ENCODE measurements at regions of chr16 and their contacts with region 1.

Region 1: GRCh38 chr16:75198135-75198600 is 8.8 kb downstream of the CTRB2 start:
- DNase-seq: peak in 1 of 4 experiments; percentile 20
- ATAC-seq: peak; percentile 30
- H3K4me3 ChIP-seq: no peak overlapping the region
- H3K27ac ChIP-seq: no peak overlapping the region
- H3K4me1 ChIP-seq: peaks cover 0 to 8% of the 10 kb centered on the region in 2 experiments; a peak in 3 of 5 replicates
- H3K27me3 ChIP-seq: peaks cover 39 to 46% of the 10 kb centered on the region in 2 experiments
- CTCF ChIP-seq: no peak
- EP300 ChIP-seq: no peak
- POLR2A ChIP-seq: no peak
- RAD21 ChIP-seq: no peak

Region 2: GRCh38 chr16:75234856-75235696 is 36.9 kb after region 1 on chr16:
- CTCF ChIA-PET with region 1: no interaction called
- POLR2A ChIA-PET with region 1: no interaction called
- in situ Hi-C with region 1: no loop called
- intact Hi-C with region 1: loop called (anchors 5 kb)
- DNase-seq: no peak
- ATAC-seq: no peak
- H3K4me3 ChIP-seq: no peak overlapping the region
- H3K27ac ChIP-seq: no peak overlapping the region
- H3K4me1 ChIP-seq: peaks cover 0 to 62% of the 10 kb centered on the region in 2 experiments; a peak in 3 of 5 replicates
- H3K27me3 ChIP-seq: no peaks in the 10 kb centered on the region
- CTCF ChIP-seq: no peak
- EP300 ChIP-seq: no peak
- POLR2A ChIP-seq: no peak
- RAD21 ChIP-seq: no peak

Region 3: DNA sequence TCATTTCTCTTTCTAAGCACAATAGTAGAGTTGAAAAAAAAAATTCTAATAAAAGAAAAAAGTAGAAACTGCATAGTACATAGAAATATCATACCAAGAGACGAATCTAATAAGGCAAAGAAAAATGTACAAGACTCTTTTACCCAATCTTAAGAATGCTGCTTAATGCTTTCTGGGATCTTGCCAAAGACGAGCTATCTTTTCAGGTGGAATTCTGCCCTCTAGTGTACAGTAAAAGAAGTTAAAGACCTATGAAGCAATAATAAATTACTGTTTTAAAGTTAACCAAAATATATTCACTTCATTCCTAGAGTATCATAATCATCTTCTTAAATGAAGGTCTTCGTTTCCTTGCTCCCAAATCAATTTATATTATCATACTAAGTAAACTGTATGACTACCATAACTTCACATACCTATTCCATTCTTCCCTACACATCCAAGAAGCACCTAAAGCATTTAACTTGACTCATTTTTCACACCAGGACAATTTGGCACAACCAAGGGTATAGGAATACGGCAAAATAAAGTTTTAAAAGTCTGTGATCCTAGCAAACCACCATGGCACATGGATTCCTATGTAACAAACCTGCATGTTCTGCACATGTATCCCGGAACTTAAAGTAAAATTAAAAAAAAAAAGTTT is 187.5 kb after region 1 on chr16:
- CTCF ChIA-PET with region 1: interaction called, 18 read pairs
- POLR2A ChIA-PET with region 1: interaction called, 5 read pairs
- in situ Hi-C with region 1: loop called (anchors 5 kb)
- intact Hi-C with region 1: loop called (anchors 1 kb)
- DNase-seq: peak; percentile 39 to 85 (median 45)
- ATAC-seq: peak; percentile 67
- H3K4me3 ChIP-seq: no peak overlapping the region
- H3K27ac ChIP-seq: no peak overlapping the region
- H3K4me1 ChIP-seq: peaks cover 0 to 3% of the 10 kb centered on the region in 2 experiments; a peak in 1 of 5 replicates
- H3K27me3 ChIP-seq: no peaks in the 10 kb centered on the region
- CTCF ChIP-seq: peak in 2 of 3 experiments; percentile 48 to 76; a peak in 4 of 6 replicates
- EP300 ChIP-seq: no peak
- POLR2A ChIP-seq: no peak
- RAD21 ChIP-seq: peak; percentile 94

Region 4: DNA sequence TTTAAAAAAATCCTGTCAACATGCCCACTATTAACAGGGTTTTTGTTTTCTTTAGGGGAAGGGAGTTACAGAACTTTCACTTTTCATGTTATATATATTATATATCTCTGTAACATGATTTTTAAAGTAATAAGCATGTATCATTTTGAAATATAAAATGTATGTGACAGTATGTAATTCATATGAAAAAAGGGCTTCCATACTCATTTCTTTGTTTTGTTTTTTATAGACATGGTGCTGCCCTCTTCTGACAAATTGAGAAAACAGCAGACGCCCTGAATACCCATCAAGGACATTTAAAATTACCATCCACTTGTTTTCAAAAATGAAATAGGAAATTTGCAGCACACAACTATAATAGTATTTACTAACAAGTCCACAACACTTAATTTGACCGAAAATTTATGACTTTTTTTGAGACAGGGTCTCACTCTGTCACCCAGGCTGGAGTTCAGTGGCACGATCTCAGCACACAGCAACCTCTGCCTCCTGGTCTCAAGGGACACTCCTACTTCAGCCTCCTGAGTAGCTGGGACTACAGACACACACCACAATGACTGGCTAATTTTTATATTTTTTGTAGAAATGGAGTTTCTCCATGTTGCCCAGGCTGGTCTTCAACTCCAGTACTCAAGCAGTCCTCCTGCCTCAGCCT is 204.8 kb after region 1 on chr16:
- CTCF ChIA-PET with region 1: interaction called, 4 read pairs
- POLR2A ChIA-PET with region 1: no interaction called
- in situ Hi-C with region 1: no loop called
- intact Hi-C with region 1: loop called (anchors 1 kb)
- DNase-seq: peak; percentile 18 to 36 (median 22)
- ATAC-seq: peak; percentile 63; the same call in 2 of the 3 replicates
- H3K4me3 ChIP-seq: no peak overlapping the region
- H3K27ac ChIP-seq: no peak overlapping the region
- H3K4me1 ChIP-seq: no peaks in the 10 kb centered on the region; a peak in 1 of 5 replicates
- H3K27me3 ChIP-seq: no peaks in the 10 kb centered on the region
- CTCF ChIP-seq: peak; percentile 12 to 77 (median 50); a peak in 4 of 6 replicates
- EP300 ChIP-seq: no peak
- POLR2A ChIP-seq: no peak
- RAD21 ChIP-seq: peak; percentile 48 to 62

Region 5: DNA sequence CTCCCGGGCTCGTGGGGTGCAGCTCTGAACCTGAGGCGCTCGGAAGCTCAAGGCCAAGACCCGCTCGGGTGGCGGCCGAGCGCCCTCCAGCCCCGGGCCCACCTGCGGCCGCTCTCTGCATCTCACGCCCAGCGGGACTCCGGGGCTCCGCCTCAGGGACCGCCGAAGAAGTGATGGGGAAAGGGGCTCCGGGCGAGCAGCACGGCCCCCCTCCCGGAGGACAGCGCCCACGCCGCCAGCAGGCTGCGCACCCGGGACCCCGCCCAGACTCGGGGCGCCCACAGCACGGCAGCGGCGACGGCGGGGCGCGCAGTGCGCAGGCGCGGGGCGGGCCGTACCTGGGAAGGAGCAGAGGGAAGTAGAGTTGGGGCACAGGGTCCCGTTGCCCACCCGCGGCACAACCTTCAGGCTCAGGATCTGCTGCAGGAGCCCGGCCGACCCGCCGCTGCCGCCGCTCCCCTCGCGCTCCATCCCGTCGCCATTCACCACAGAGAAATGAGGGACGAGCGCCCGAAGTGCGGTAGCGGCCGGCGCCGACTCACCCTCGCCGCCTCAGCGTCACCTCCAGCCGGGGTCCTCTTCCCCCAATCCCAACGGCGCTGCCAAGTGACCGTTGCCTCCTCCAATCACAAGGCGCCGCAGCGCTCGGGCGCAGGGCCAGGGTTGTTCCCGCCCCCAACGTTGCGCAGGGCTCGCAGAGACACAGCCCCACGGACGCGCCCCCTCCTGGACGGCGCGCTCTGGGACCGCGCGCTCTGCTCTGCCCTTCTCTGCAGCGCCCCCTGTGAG is 266.2 kb after region 1 on chr16 and contains the start of gene TMEM170A:
- CTCF ChIA-PET with region 1: interaction called, 6 read pairs
- POLR2A ChIA-PET with region 1: no interaction called
- in situ Hi-C with region 1: no loop called
- intact Hi-C with region 1: loop called (anchors 2 kb)
- DNase-seq: peak; percentile 97 to 99 (median 97)
- ATAC-seq: peak; percentile 98
- H3K4me3 ChIP-seq: peak within 1 kb of the TSS; percentile 78
- H3K27ac ChIP-seq: peak within 1 kb of the TSS; percentile 92
- H3K4me1 ChIP-seq: peaks cover 3 to 9% of the 10 kb centered on the region in 2 experiments; a peak in 4 of 5 replicates
- H3K27me3 ChIP-seq: no peaks in the 10 kb centered on the region
- CTCF ChIP-seq: peak; percentile 100
- EP300 ChIP-seq: peak; percentile 22; the same call in 1 of the 2 replicates
- POLR2A ChIP-seq: peak; percentile 97
- RAD21 ChIP-seq: peak; percentile 84 to 87
- polyA plus RNA-seq, gene TMEM170A: 6.1 to 7.3 TPM

Region 6: DNA sequence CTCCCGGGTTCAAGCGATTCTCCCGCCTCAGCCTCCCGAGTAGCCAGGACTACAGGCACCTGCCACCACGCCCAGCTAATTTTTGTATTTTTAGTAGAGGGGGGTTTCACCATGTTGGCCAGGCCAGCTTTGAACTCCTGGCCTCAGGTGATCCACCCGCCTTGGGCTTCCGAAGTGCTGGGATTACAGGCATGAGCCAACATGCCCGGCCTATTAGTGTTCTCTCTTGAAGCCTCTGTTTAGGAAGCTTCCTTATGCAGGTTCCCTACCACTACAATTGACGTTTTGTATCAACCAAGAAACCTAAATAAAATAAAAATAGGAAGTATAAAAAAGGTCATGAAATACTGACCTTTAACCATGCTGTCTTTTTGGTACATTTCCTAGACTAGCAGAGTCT is 321.7 kb after region 1 on chr16:
- CTCF ChIA-PET with region 1: interaction called, 10 read pairs
- POLR2A ChIA-PET with region 1: no interaction called
- in situ Hi-C with region 1: no loop called
- intact Hi-C with region 1: no loop called
- DNase-seq: no peak
- ATAC-seq: no peak
- H3K4me3 ChIP-seq: no peak overlapping the region
- H3K27ac ChIP-seq: no peak overlapping the region
- H3K4me1 ChIP-seq: peaks cover 0 to 14% of the 10 kb centered on the region in 2 experiments; a peak in 3 of 5 replicates
- H3K27me3 ChIP-seq: peaks cover 8 to 14% of the 10 kb centered on the region in 2 experiments; a peak in 4 of 5 replicates
- CTCF ChIP-seq: no peak
- EP300 ChIP-seq: no peak
- POLR2A ChIP-seq: no peak
- RAD21 ChIP-seq: no peak

Measured in K562 (cell line).